Dendritic cell treated with granulocyte-macrophage colony-stimulating factor and Interleukin-4, amounts not matched to agents 40 ng/mL and 50 ng/mL, for 4 days (primary cell): ENCODE measurements at regions of chr3 and their contacts with region 1.

Region 1: DNA sequence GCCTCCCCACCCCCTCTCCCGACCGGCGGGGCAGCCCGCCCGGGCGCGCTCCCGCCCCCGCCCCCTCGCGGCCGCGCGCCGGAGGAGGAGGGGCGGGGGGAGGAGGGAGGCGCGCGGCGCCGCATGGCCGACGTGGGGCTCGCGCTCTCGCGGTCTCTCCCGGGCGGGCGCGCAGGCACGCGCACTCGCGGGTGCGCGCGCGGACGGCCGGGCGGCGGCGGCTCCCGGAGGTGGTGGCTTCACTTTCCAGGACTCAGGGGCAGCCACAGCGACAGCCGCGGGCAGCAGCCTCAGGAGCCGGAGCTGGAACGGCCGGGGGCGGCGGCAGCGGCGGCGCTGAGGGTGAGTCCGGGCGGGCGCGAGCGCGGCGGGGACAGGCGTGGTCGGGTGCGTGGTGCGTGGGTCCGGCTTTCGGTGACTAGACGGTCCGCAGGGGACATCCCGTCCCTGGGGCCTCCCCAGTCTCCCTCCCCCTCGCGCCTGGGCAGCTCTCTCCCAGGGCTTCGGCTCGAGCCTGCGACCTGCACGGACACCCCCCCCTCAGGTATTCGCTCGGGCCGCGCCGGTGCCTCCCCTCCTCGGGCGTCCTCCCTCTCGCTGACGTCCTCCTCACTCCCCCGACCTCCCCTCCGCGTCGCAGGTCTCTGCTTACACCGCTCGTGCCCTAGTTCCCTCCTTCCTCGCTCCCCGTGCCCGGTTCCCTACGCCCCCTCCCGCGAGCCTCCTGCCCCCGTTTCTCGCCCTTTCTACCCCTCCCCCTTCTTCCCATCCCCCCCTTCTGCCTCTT is at the start of gene UBE2E2:
- H3K4me3 Mint-ChIP-seq: peak within 1 kb of the TSS; percentile 95
- H3K27ac Mint-ChIP-seq: peak within 1 kb of the TSS; percentile 93
- H3K4me1 Mint-ChIP-seq: peaks cover 33% of the 10 kb centered on the region
- H3K27me3 Mint-ChIP-seq: peaks cover 16% of the 10 kb centered on the region

Region 2: GRCh38 chr3:23071758-23072157 is 131.4 kb before region 1 on chr3:
- intact Hi-C with region 1: loop called (anchors 10 kb)
- H3K4me3 Mint-ChIP-seq: no peak overlapping the region
- H3K27ac Mint-ChIP-seq: peak overlapping the region; percentile 82
- H3K4me1 Mint-ChIP-seq: peaks cover 55% of the 10 kb centered on the region
- H3K27me3 Mint-ChIP-seq: no peaks in the 10 kb centered on the region

Region 3: DNA sequence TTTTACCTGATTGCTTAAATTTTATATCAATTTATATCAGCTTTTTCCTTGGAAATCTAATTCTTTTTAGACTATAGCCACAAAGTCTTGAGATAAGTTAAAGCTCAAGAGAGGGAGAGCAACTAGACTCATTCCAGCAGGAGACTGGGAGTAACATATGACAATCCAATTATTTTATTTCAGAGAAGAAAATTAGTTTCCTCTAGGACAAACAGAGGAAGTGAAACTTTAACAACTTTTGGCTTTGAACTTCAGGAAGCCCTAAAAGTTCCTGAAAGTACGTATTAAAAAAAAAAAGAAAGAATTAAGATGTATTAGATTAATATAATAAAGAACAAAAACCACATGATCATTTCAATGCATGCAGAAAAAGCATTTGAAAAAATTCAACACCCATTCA is 13.9 kb before region 1 on chr3:
- intact Hi-C with region 1: no loop called
- H3K4me3 Mint-ChIP-seq: no peak overlapping the region
- H3K27ac Mint-ChIP-seq: no peak overlapping the region
- H3K4me1 Mint-ChIP-seq: peaks cover 12% of the 10 kb centered on the region
- H3K27me3 Mint-ChIP-seq: peaks cover 45% of the 10 kb centered on the region

Region 4: GRCh38 chr3:23221136-23221535 is 18.0 kb after region 1 on chr3:
- intact Hi-C with region 1: loop called (anchors 2 kb)
- H3K4me3 Mint-ChIP-seq: peak overlapping the region; percentile 76
- H3K27ac Mint-ChIP-seq: peak overlapping the region; percentile 93
- H3K4me1 Mint-ChIP-seq: peaks cover 38% of the 10 kb centered on the region
- H3K27me3 Mint-ChIP-seq: no peaks in the 10 kb centered on the region

Region 5: DNA sequence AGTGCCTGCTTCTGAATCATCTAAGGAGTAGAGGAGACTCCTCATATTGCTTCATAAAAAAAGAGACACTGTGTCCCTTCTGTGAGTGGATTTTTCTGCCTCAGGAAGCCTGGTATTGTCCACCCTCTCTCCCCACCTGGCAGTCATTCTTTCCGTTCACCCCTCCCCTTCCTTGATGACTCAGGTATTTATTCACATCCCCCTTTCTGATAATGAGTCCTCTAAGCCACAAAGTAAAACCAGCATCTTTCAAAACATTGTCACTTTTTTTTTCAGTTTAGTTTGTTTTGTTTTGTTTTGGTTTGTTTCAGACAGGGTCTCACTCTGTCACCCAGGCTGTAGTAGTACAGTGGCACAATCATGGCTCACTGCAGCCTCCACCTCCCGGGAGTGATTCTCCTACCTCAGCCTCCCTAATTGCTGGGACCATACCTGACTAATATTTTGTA is 537.4 kb after region 1 on chr3:
- intact Hi-C with region 1: loop called (anchors 10 kb)
- H3K4me3 Mint-ChIP-seq: no peak overlapping the region
- H3K27ac Mint-ChIP-seq: peak overlapping the region; percentile 56
- H3K4me1 Mint-ChIP-seq: peaks cover 17% of the 10 kb centered on the region
- H3K27me3 Mint-ChIP-seq: peaks cover 2% of the 10 kb centered on the region

Region 6: GRCh38 chr3:23805633-23806533 is 602.8 kb after region 1 on chr3 and contains the start of gene UBE2E1:
- intact Hi-C with region 1: loop called (anchors 5 kb)
- H3K4me3 Mint-ChIP-seq: peak within 1 kb of the TSS; percentile 99
- H3K27ac Mint-ChIP-seq: peak within 1 kb of the TSS; percentile 99
- H3K4me1 Mint-ChIP-seq: peaks cover 45% of the 10 kb centered on the region
- H3K27me3 Mint-ChIP-seq: peaks cover 5% of the 10 kb centered on the region